Naive thymus-derived CD4-positive, alpha-beta T cell (primary cell): ENCODE measurements at regions of chr19 and their contacts with region 1.

Region 1: DNA sequence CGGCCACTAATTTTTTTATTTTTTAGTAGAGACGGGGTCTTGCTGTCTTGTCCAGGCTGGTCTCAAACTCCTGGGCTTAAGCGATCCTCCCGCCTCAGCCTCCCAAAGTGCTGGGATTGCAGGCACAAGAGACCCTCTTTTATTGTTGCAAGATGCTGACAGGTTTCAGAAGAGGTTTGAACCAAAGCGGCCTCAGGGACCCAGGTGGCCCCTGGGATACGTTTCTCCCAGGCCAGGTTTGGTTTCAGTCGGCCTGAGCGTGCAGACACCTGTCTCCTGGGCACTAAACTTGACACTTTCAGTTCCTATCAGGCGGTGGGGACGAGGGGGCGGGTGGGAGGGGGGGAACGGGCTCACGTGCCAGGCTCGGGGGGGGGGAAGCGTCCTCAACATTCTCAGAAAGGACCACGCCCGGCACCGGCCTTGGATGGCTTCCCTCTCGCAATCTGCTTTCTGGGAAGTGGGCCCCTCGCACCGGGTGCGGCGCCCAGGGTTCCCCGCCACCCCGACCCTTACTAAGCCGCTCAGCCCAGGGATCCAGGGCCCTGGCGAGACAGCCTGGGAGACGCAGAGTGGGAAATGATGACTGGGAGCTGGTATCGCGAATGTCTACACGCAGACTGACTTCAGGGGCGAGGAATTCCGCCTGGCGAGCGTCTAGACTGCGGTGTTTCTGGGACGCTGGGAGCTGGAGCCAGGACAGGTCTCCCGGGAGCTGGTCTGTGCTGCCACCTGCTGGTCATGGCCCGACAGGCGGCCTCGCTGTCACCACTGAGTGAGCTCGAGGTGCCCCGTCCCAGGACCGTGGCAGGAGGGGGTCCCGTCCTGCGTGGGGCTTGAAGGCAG is 91.6 kb downstream of the GNG7 start:
- DNase-seq: peak; percentile 69 to 93 (median 81)
- ATAC-seq: peak; percentile 86
- H3K4me3 ChIP-seq: peak overlapping the region; percentile 61
- H3K4me3 Mint-ChIP-seq: peak overlapping the region; percentile 70 to 91 (median 85)
- H3K27ac ChIP-seq: peak overlapping the region; percentile 55
- H3K27ac Mint-ChIP-seq: peak overlapping the region in 6 of 9 donors; percentile 41 to 86 (median 60)
- H3K4me1 ChIP-seq: peaks cover 17 to 23% of the 10 kb centered on the region in 2 donors
- H3K4me1 Mint-ChIP-seq: peaks cover 16 to 44% (median 34%) of the 10 kb centered on the region in 7 donors
- H3K27me3 ChIP-seq: no peaks in the 10 kb centered on the region
- H3K27me3 Mint-ChIP-seq: peaks cover 0 to 26% (median 0%) of the 10 kb centered on the region in 5 donors

Region 2: DNA sequence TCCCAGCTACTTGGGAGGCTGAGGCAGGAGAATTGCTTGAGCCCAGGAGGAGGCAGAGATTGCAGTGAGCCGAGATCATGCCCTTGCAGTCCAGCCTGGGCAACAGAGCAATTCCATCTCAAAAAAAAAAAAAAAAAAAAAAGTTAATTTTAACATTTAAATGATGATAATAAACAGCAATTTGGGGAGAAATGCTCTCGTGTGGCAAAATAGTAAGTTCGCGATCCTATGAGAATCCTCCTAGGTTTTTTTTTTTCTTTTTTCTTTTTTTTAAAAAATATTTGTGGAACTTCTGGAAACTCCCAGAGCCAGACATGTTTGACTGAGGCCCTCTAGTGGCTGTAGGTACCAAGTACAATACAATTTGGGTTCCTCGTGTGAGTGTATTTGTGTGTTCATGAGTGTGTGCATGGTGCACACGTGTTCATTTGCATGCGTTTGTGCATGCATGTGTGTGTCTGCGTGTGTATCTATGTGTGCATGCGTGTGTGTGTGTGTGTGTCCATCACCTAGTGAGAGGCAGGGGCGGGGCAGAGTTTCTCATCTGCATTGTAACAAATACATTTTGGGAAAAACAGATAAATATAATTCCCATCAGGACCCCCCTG is 219.6 kb before region 1 on chr19:
- CTCF ChIA-PET with region 1: interaction called, 11 read pairs
- POLR2A ChIA-PET with region 1: no interaction called
- intact Hi-C with region 1: loop called in 1 of 2 experiments (anchors 5 kb)
- DNase-seq: peak in 7 of 9 donors; percentile 26 to 59 (median 46)
- ATAC-seq: peak; percentile 88
- H3K4me3 ChIP-seq: no peak overlapping the region
- H3K4me3 Mint-ChIP-seq: no peak overlapping the region
- H3K27ac ChIP-seq: no peak overlapping the region
- H3K27ac Mint-ChIP-seq: peak overlapping the region in 2 of 9 donors; percentile 1 to 91
- H3K4me1 ChIP-seq: no peaks in the 10 kb centered on the region
- H3K4me1 Mint-ChIP-seq: peaks cover 4 to 16% (median 5%) of the 10 kb centered on the region in 7 donors
- H3K27me3 ChIP-seq: no peaks in the 10 kb centered on the region
- H3K27me3 Mint-ChIP-seq: peaks cover 0 to 13% (median 0%) of the 10 kb centered on the region in 5 donors

Region 3: GRCh38 chr19:2524838-2525723 is 85.8 kb before region 1 on chr19:
- CTCF ChIA-PET with region 1: no interaction called
- POLR2A ChIA-PET with region 1: no interaction called
- intact Hi-C with region 1: no loop called
- DNase-seq: no peak
- ATAC-seq: no peak
- H3K4me3 ChIP-seq: no peak overlapping the region
- H3K4me3 Mint-ChIP-seq: no peak overlapping the region
- H3K27ac ChIP-seq: no peak overlapping the region
- H3K27ac Mint-ChIP-seq: no peak overlapping the region
- H3K4me1 ChIP-seq: no peaks in the 10 kb centered on the region
- H3K4me1 Mint-ChIP-seq: no peaks in the 10 kb centered on the region
- H3K27me3 ChIP-seq: no peaks in the 10 kb centered on the region
- H3K27me3 Mint-ChIP-seq: no peaks in the 10 kb centered on the region

Region 4: GRCh38 chr19:2561895-2562294 is 49.0 kb before region 1 on chr19:
- CTCF ChIA-PET with region 1: interaction called, 5 read pairs
- POLR2A ChIA-PET with region 1: interaction called, 12 read pairs
- intact Hi-C with region 1: loop called in 1 of 2 experiments (anchors 5 kb)
- DNase-seq: peak; percentile 38 to 78 (median 71)
- ATAC-seq: peak; percentile 93
- H3K4me3 ChIP-seq: peak overlapping the region; percentile 70
- H3K4me3 Mint-ChIP-seq: peak overlapping the region; percentile 83 to 96 (median 92)
- H3K27ac ChIP-seq: peak overlapping the region; percentile 78
- H3K27ac Mint-ChIP-seq: peak overlapping the region; percentile 92 to 99 (median 98)
- H3K4me1 ChIP-seq: peaks cover 8 to 11% of the 10 kb centered on the region in 2 donors
- H3K4me1 Mint-ChIP-seq: peaks cover 12 to 56% (median 20%) of the 10 kb centered on the region in 7 donors
- H3K27me3 ChIP-seq: no peaks in the 10 kb centered on the region
- H3K27me3 Mint-ChIP-seq: no peaks in the 10 kb centered on the region

Region 5: GRCh38 chr19:2627319-2627829 is 16.5 kb after region 1 on chr19:
- CTCF ChIA-PET with region 1: interaction called, 39 read pairs
- POLR2A ChIA-PET with region 1: interaction called, 65 read pairs
- intact Hi-C with region 1: no loop called
- DNase-seq: no peak
- ATAC-seq: peak; percentile 78
- H3K4me3 ChIP-seq: no peak overlapping the region
- H3K4me3 Mint-ChIP-seq: peak overlapping the region in 1 of 10 donors; percentile 42
- H3K27ac ChIP-seq: no peak overlapping the region
- H3K27ac Mint-ChIP-seq: peak overlapping the region in 6 of 9 donors; percentile 42 to 85 (median 80)
- H3K4me1 ChIP-seq: peaks cover 15 to 25% of the 10 kb centered on the region in 2 donors
- H3K4me1 Mint-ChIP-seq: peaks cover 13 to 68% (median 44%) of the 10 kb centered on the region in 7 donors
- H3K27me3 ChIP-seq: no peaks in the 10 kb centered on the region
- H3K27me3 Mint-ChIP-seq: no peaks in the 10 kb centered on the region